ENCODE measurements at regions of chr14 and their contacts with region 1.

Region 1: DNA sequence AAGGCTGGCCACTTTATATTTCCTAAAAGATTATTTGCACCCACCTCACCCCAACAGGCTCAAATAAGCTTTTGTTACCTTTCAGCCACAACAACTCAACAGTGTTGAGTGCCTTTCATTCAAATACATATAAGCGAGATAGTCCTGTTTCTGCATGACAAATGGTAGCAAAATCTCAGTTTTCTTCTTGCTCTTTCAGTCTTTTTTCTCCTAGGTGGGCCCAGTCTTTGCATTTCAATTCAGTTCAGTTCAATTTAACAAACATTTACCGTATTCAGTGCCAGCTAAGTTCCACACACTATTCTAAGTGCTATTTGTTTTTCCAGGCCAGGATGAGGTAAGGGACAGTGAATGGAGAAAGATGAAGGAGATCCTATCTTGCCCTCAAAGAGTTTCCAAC is 25.9 kb upstream of the BMP4 start:
- DNase-seq: no peak
- H3K27ac ChIP-seq: no peak overlapping the region
- CTCF ChIP-seq: no peak

Region 2: GRCh38 chr14:52844262-52845060 is 1138.1 kb before region 1 on chr14:
- CTCF ChIA-PET with region 1: no interaction called
- POLR2A ChIA-PET with region 1: interaction called, 11 read pairs
- DNase-seq: no peak
- H3K27ac ChIP-seq: no peak overlapping the region
- CTCF ChIP-seq: no peak

Region 3: DNA sequence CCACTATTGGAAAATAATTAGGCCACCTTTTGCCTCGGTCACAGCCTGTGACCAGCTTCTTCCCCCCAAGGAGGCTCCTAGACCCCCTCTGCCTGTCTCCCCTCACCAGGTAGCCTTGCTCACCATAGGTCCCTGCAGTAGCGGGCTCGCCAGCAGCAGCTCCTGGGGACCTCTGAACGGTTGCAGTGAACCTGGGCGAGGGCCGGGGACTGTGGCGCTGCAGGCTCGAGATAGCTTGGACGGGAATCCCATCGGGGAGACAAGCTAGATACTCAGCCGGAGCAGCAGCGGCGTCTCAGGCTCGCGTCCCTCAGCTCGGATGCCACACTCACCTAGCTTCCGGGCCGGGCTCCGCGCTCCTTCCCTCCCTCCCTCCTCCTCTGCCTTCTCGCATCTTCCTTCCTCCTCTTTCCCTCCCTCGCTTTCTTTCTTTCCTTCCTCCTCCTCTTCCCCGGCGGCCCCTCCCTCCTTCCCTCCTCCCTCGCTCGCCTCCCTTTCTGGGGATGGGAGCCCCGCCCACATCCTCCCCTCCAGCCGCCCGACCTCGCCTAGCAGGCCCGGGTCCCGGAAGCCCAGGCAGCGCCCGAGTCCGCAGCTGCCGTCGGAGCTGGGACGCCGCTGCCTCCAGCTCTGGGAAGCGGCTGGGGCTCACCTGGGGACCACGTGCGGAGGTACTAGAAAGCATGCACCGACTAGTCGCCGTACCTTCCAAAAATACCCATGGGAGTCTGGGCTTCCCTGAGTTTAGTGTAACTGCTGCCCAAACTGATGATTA is 25.9 kb before region 1 on chr14 and contains the start of gene BMP4:
- CTCF ChIA-PET with region 1: no interaction called
- POLR2A ChIA-PET with region 1: no interaction called
- DNase-seq: no peak
- H3K27ac ChIP-seq: peak within 1 kb of the TSS; percentile 48
- CTCF ChIP-seq: no peak